ENCODE measurements at regions of chr12 and their contacts with region 1.

Region 1: DNA sequence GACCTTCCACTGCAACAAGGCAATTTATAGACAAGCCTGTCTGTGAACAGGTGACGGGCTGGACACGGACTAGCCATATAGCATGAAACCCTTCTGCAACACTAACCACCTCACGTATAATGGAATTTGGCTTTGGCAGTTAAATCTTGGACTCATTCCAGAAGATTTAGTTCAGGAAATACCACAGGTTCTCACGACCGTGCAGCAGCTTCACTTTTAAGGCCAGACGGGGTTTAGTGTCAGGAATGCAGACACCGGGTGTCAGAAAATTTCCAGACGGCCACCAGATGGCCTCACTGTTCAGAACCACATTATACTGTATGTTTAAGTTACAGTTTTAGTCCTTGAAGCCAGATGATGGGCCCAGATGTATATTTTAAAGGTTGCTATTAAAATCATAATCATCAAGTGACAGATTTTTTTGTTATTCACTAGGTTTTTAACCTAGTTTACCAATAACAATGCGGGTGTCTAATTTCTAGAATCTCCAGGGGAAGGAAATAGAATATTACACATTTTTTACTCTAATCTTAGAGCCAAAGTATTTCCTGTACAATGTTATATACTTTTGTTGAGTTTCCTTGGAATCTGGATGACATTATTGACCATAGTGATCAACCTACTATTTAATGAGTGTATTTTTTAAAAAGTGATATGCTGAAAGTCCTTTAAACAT is 90.5 kb upstream of the TMPO start:
- DNase-seq: peak; percentile 69 to 73
- H3K4me3 ChIP-seq: no peak overlapping the region
- H3K27ac ChIP-seq: no peak overlapping the region
- H3K4me1 ChIP-seq: peaks cover 0 to 6% of the 10 kb centered on the region in 2 donors
- H3K27me3 ChIP-seq: no peaks in the 10 kb centered on the region
- CTCF ChIP-seq: peak; percentile 34 to 76 (median 62)
- POLR2A ChIP-seq: no peak

Region 2: DNA sequence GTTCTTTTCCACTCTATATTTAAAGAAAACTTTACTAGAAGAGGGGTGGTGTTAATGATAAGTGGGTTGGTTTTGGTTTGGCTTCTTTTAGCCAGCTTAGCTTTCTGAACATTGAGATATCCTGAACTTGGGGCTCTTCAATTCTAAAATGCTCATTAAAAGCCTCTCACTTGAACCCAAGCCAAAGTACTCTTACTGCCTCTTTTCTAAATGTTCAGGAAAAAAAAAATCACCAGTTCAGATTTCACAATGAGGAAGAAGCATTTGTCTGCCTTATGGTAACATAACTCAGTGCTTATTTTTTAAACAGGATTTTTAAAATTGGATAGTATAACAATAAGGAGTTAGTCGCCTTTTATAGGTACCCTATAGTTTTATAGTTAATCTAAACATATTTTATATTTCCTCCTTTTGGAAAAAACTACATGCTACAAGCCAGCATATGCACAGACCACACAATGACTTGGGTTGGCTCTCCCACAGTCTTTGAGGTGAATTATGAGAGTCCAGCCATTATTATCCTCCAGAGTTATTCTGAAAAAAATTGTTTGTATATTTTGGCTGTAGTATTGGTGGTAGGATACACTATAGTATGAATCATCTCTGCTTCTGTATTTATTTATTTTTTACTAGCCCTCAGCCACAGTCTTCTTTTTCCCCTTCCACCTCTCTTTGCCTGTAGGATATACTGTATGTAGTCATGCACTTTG is 105.0 kb before region 1 on chr12:
- intact Hi-C with region 1: no loop called
- DNase-seq: no peak
- H3K4me3 ChIP-seq: no peak overlapping the region
- H3K27ac ChIP-seq: no peak overlapping the region
- H3K4me1 ChIP-seq: no peaks in the 10 kb centered on the region
- H3K27me3 ChIP-seq: no peaks in the 10 kb centered on the region
- CTCF ChIP-seq: no peak
- POLR2A ChIP-seq: no peak

Region 3: DNA sequence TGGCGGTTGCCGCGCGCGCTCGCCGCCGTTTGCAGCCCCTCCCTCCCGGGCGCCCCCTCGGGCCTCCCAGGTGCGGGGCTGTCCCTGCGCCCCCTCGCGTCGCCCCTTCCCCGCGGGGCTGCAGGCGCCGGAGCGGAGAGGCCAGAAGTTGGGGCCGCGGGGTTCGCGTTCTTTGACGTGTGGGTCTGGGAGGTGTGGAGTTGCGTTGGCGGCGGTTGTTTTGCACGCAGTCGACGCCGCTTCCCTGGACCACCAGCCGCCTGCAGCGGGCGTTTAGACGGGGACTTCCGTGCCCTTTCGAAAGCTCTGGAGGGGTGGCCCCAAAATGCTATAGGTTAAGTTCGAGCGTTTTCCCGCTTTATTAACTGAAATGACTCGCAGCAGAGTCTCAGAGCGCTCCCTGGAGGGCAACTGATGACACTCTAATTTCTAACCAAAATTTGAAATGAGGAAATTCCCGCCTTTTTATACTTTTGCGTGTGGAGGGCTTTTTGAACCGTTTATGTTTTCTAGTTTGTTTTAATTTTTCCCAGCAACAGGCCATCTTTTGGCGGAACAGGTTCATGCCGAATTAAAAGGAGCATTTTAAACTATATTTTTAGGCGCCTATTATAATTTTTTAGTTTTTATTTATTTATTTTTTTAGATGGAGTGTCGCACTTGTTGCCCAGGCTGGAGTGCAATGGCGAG is 91.5 kb after region 1 on chr12:
- intact Hi-C with region 1: loop called (anchors 10 kb)
- DNase-seq: peak; percentile 64 to 74
- H3K4me3 ChIP-seq: peak overlapping the region; percentile 89 to 99 (median 97)
- H3K27ac ChIP-seq: peak overlapping the region; percentile 94 to 99 (median 96)
- H3K4me1 ChIP-seq: peaks cover 19 to 21% of the 10 kb centered on the region in 2 donors
- H3K27me3 ChIP-seq: no peaks in the 10 kb centered on the region
- CTCF ChIP-seq: peak; percentile 45 to 74 (median 66)
- POLR2A ChIP-seq: no peak

Region 4: GRCh38 chr12:99111600-99111999 is 686.7 kb after region 1 on chr12:
- intact Hi-C with region 1: no loop called
- DNase-seq: no peak
- H3K4me3 ChIP-seq: no peak overlapping the region
- H3K27ac ChIP-seq: no peak overlapping the region
- H3K4me1 ChIP-seq: no peaks in the 10 kb centered on the region
- H3K27me3 ChIP-seq: no peaks in the 10 kb centered on the region
- CTCF ChIP-seq: no peak
- POLR2A ChIP-seq: no peak

Measured in thyroid gland (tissue), 4 donors.